IMR-90 (cell line): ENCODE measurements at regions of chr2 and their contacts with region 1.

Region 1: DNA sequence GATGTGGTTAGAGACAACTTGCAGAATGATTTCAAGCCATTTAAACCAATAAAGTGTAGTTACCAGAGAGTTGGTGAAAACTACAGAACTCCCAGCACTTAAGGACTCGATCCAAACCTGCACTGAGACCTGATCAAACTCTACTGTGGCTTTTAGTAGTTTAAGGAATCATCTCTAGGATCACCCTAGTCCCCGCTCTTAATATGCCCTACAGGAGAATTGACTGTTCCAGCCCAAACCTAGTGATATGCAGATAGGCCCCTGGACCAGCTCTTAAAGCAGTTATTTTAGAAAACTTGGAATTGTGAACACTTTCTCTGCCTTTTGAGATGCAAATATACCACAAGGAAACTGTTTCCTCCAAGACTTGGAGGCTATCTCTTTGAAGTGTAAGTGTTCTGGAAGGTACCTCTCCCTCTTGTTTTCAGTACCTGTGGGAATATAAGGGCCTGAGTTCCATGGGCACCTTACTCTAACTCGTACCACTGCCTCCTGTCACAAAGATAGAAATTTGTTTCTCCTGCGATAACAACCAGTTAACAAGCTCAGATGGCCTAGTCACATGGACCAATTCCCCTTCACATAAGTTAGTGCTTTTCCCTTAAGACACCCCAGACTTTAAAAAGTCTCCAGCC is 1367.2 kb upstream of the SLC39A10 start:
- DNase-seq: no peak
- ATAC-seq: no peak
- H3K4me3 ChIP-seq: no peak overlapping the region
- H3K27ac ChIP-seq: no peak overlapping the region
- H3K4me1 ChIP-seq: no peaks in the 10 kb centered on the region
- H3K27me3 ChIP-seq: no peaks in the 10 kb centered on the region
- CTCF ChIP-seq: no peak
- POLR2A ChIP-seq: no peak
- RAD21 ChIP-seq: no peak

Region 2: DNA sequence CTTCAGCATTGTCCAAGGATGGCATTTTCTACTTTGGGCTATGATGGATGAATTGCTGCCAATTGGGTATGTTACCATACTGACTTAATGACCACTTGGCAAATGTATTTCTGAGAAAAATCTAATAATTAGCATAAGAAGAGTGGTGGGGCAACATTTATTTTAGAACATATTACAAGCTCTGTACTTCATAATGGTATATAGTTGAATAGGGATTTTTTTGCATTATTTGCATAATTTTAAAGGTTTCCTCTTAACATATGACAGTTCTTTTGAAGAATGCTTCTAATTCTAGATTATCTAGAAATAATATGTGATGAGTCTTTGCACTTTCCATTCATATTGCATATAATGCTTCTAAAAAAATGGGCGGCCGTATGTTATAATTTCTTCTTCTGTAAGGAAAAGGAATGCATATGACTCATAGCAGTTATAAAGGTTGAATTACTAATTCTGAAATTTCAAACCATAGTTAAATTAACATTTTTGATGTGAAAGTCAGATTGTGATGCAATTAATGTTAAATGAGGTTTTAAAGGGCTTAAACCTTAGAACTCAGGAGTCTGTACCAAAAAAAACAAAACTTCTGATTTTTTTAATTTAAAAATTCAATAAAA is 285.1 kb before region 1 on chr2:
- CTCF ChIA-PET with region 1: no interaction called
- POLR2A ChIA-PET with region 1: no interaction called
- dilution Hi-C with region 1: no loop called
- in situ Hi-C with region 1: no loop called
- intact Hi-C with region 1: no loop called
- DNase-seq: no peak
- ATAC-seq: no peak
- H3K4me3 ChIP-seq: no peak overlapping the region
- H3K27ac ChIP-seq: no peak overlapping the region
- H3K4me1 ChIP-seq: no peaks in the 10 kb centered on the region
- H3K27me3 ChIP-seq: no peaks in the 10 kb centered on the region
- CTCF ChIP-seq: no peak
- POLR2A ChIP-seq: no peak
- RAD21 ChIP-seq: no peak

Region 3: GRCh38 chr2:194020155-194020554 is 269.7 kb before region 1 on chr2:
- CTCF ChIA-PET with region 1: no interaction called
- POLR2A ChIA-PET with region 1: no interaction called
- dilution Hi-C with region 1: no loop called
- in situ Hi-C with region 1: no loop called
- intact Hi-C with region 1: no loop called
- DNase-seq: no peak
- ATAC-seq: no peak
- H3K4me3 ChIP-seq: no peak overlapping the region
- H3K27ac ChIP-seq: no peak overlapping the region
- H3K4me1 ChIP-seq: no peaks in the 10 kb centered on the region
- H3K27me3 ChIP-seq: no peaks in the 10 kb centered on the region
- CTCF ChIP-seq: no peak
- POLR2A ChIP-seq: no peak
- RAD21 ChIP-seq: no peak

Region 4: GRCh38 chr2:194332799-194333497 is 43.1 kb after region 1 on chr2:
- CTCF ChIA-PET with region 1: no interaction called
- POLR2A ChIA-PET with region 1: no interaction called
- dilution Hi-C with region 1: no loop called
- in situ Hi-C with region 1: no loop called
- intact Hi-C with region 1: loop called (anchors 2 kb)
- DNase-seq: no peak
- ATAC-seq: no peak
- H3K4me3 ChIP-seq: no peak overlapping the region
- H3K27ac ChIP-seq: no peak overlapping the region
- H3K4me1 ChIP-seq: no peaks in the 10 kb centered on the region
- H3K27me3 ChIP-seq: no peaks in the 10 kb centered on the region
- CTCF ChIP-seq: no peak
- POLR2A ChIP-seq: no peak
- RAD21 ChIP-seq: no peak